ENCODE measurements at regions of chr3 and their contacts with region 1.

Region 1: DNA sequence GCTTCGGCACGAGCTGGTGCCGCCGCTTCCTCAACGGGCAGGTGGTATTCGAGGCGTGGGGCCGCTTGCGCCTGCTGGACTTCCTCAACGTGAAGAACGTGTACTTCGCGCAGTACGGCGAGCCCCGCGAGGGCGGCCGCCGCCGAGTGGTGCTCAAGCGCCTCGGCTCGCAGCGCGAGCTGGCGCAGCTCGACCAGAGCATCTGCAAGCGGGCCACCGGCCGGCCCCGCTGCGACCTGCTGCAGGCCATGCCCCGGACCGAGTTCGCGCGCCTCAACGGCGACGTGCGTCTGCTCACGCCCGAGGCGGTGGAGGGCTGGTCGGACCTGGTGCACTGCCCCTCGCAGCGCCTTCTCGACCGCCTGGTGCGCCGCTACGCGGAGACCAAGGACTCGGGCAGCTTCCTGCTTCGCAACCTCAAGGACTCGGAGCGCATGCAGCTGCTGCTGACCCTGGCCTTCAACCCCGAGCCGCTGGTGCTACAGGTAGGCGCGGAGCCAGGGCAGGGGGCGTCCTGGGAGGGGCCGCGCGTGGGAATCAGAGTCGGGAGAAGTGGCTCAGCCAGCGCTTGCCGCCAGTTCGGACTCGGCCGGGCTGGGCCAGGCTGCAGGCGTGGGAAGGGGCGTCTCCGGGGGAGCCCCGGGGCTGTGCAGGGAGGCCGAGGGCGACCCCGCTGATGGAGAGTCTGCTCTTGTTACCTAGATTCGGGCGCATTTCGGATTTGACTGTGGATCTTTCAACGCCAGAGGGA is 1.1 kb downstream of the DIPK2A start:
- DNase-seq: peak; percentile 56
- ATAC-seq: peak; percentile 21
- H3K4me3 Mint-ChIP-seq: peak overlapping the region; percentile 92
- H3K27ac Mint-ChIP-seq: peak overlapping the region; percentile 88
- H3K4me1 Mint-ChIP-seq: peaks cover 30% of the 10 kb centered on the region
- H3K27me3 Mint-ChIP-seq: no peaks in the 10 kb centered on the region

Region 2: DNA sequence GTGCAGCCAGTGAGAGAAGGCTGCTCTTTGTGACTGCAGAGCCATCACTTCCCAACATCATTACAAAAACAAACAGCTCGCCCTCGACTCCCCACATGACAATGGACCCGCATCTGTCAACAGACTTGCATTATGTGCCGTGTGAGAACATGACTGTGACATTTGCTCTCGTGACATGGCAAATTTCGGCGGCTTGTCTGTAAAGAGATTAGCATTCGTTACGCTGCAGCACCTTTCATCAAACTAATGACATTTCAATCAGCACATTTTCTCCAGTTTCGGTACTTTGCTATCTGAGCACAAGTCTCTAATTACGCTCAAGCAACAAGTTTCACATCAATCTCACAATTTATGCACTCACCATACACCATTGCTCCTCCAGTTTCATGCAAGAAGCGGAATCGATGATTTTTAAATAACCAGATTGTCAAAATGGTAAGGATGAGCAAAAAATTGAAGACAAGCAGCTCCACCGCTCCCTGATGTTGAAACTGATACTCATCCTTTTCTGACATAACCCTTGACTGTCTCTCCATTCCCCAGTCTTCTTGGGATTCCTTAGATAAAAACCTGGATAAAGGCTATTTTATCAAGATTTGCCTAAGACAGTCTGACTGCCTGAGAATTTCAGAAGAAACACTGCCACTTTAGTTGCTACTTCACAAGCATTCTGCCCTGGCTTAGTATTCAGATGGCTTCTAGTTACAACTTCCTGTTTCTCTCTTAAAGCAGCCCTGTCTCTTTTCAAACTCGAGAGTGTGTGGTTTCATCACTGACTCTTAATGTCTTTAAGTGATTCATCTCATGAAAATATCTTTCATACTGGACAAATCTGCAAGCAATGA is 124.7 kb before region 1 on chr3 and contains the start of gene SLC9A9:
- CTCF ChIA-PET with region 1: interaction called, 13 read pairs
- POLR2A ChIA-PET with region 1: interaction called, 6 read pairs
- DNase-seq: peak; percentile 48
- ATAC-seq: peak; percentile 94
- H3K4me3 Mint-ChIP-seq: peak within 1 kb of the TSS; percentile 88
- H3K27ac Mint-ChIP-seq: peak within 1 kb of the TSS; percentile 93
- H3K4me1 Mint-ChIP-seq: peaks cover 32% of the 10 kb centered on the region
- H3K27me3 Mint-ChIP-seq: no peaks in the 10 kb centered on the region
- total RNA-seq, gene SLC9A9: 6.6 to 7.4 TPM

Region 3: GRCh38 chr3:143885780-143886427 is 86.8 kb before region 1 on chr3:
- CTCF ChIA-PET with region 1: interaction called, 12 read pairs
- POLR2A ChIA-PET with region 1: no interaction called
- DNase-seq: peak; percentile 57
- ATAC-seq: peak; percentile 75
- H3K4me3 Mint-ChIP-seq: no peak overlapping the region
- H3K27ac Mint-ChIP-seq: no peak overlapping the region
- H3K4me1 Mint-ChIP-seq: no peaks in the 10 kb centered on the region
- H3K27me3 Mint-ChIP-seq: peaks cover 13% of the 10 kb centered on the region

Region 4: DNA sequence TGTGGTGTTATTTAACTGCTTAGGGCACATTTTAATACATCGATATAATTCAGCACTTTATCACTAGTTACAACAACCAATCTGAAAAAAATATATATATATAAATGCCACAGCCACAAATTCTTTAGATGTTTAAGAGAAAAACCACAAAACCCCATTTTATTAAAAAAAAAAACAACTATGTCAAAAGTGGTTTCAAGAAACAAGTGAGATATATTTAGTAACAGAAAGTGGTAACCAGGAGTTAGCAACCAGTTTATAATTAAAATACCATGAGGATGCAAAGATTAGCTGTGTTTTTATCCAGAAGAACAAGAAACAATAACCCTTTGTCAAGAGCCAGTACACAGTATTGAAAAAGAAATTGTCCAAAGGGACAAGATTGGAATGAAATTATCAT is 15.8 kb before region 1 on chr3:
- CTCF ChIA-PET with region 1: interaction called, 13 read pairs
- POLR2A ChIA-PET with region 1: interaction called, 3 read pairs
- DNase-seq: no peak
- ATAC-seq: no peak
- H3K4me3 Mint-ChIP-seq: peak overlapping the region; percentile 38
- H3K27ac Mint-ChIP-seq: no peak overlapping the region
- H3K4me1 Mint-ChIP-seq: peaks cover 18% of the 10 kb centered on the region
- H3K27me3 Mint-ChIP-seq: peaks cover 9% of the 10 kb centered on the region